Activated CD4-positive, alpha-beta T cell treated with anti-CD3 and anti-CD28 coated beads, Interleukin-2, amount 10 ng/mL, durations not matched to agents 7 days and 5 days (primary cell): ENCODE measurements at regions of chr11 and their contacts with region 1.

Region 1: DNA sequence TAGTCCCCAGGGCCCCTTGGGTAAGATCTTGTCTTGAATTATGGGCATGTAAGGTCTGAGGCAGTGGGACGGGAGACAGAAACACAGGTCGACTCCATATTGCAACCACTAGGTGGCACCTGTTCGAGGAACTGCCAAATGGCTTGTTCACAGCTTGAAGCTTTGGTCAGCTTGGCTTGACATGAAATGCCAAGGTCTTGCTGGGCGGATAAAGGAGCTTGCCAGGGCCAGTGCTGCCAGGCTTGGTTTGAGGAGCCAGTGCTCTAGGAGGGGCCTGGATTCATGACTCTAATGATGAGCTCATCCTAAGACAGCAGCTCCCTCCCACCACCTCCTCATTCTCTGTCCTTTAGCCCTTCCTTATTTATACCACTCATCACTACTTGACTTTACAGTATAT is 11.9 kb upstream of the NRIP3 start:
- DNase-seq: peak; percentile 69
- H3K4me3 Mint-ChIP-seq: no peak overlapping the region
- H3K27ac Mint-ChIP-seq: no peak overlapping the region
- H3K4me1 Mint-ChIP-seq: peaks cover 31% of the 10 kb centered on the region
- H3K27me3 Mint-ChIP-seq: peaks cover 11% of the 10 kb centered on the region

Region 2: DNA sequence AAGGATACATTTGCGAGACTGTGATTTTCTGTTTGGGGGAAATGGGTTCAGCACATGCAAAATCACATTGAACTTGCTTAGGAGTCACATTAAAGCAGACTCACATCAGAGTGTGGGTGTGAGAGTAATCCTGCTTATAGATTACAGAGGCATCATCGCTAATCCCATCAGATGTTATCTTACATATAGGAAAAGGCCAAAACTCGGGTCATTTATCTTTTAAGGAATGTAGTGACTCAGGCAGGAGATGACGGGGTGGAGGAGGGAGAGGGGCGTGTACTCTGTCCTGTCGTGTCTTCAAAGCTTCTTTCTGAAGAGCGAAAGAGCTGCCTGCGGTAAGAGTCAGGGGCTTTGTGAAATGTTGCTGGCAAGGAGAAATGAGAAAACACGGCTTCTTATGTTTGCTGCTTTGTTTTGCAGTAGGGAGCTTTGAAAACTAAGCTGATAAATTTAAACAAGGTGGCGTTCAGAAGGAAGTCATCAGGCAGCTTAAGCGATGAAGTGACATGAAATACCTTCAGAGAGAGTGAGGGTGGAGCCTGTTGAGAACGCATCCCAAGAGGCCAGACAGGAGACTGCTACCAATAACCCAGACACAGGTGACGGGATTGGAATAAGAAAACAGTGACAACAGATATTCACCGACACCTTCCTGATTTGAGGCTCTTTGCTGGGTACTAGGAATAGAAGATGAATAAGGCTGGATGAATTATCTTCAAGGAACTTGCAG is 80.8 kb before region 1 on chr11:
- CTCF ChIA-PET with region 1: no interaction called
- POLR2A ChIA-PET with region 1: no interaction called
- DNase-seq: no peak
- H3K4me3 Mint-ChIP-seq: peak overlapping the region; percentile 12
- H3K27ac Mint-ChIP-seq: no peak overlapping the region
- H3K4me1 Mint-ChIP-seq: peaks cover 4% of the 10 kb centered on the region
- H3K27me3 Mint-ChIP-seq: no peaks in the 10 kb centered on the region

Region 3: DNA sequence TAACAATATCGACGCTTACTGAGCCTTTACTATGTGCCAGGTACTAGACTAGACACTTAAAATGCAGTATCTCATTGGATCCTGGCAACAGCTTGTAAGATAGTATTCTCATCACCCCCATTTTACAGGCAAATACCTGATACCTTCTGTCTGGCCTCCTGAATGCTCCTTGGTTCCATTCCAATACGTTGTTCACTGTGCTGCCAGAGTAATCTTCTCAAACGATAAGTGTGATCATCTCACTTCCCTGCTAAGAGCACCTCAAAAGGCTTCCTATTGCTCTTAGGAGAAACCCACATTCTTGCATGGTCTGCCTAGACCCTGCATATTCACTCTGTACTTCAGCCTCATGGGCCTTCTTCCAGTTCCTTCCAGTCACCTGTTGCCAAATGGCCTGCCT is 10.6 kb before region 1 on chr11:
- CTCF ChIA-PET with region 1: interaction called, 14 read pairs
- POLR2A ChIA-PET with region 1: no interaction called
- DNase-seq: no peak
- H3K4me3 Mint-ChIP-seq: peak overlapping the region; percentile 34
- H3K27ac Mint-ChIP-seq: no peak overlapping the region
- H3K4me1 Mint-ChIP-seq: peaks cover 22% of the 10 kb centered on the region
- H3K27me3 Mint-ChIP-seq: peaks cover 63% of the 10 kb centered on the region

Region 4: GRCh38 chr11:9028581-9028980 is 12.9 kb after region 1 on chr11:
- CTCF ChIA-PET with region 1: interaction called, 19 read pairs
- POLR2A ChIA-PET with region 1: no interaction called
- DNase-seq: no peak
- H3K4me3 Mint-ChIP-seq: no peak overlapping the region
- H3K27ac Mint-ChIP-seq: no peak overlapping the region
- H3K4me1 Mint-ChIP-seq: no peaks in the 10 kb centered on the region
- H3K27me3 Mint-ChIP-seq: peaks cover 6% of the 10 kb centered on the region

Region 5: DNA sequence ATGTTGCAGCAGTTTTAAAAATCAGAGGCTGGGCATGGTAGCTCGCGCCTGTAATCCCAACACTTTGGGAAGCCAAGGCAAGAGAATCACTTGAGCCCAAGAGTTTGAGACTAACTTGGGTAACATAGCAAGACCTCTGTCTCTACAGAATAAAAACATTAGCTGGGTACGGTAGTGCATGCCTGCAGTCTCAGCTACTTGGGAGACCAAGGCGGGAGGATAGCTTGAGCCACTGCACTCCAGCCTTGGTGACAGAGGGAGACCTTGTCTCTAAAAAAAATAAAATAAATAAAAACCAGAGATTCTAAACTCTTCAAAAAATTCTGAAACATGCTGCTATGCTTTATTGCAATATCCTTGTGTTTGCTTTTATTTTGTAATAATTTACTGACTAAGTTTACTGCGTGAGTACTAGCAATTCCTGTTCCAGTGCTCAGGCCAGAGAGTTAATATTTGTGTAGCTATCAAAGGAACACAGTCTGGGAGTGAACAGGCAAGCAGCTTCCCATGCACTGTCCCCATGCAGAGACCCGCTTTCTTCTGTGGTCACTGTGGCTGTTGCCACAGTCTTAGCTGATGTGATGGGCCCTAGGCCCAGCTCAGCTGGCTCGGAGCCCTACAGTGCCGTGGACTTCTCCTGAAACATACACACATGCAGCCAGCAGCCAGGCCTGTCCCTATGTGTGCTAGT is 87.7 kb after region 1 on chr11:
- CTCF ChIA-PET with region 1: no interaction called
- POLR2A ChIA-PET with region 1: no interaction called
- DNase-seq: no peak
- H3K4me3 Mint-ChIP-seq: no peak overlapping the region
- H3K27ac Mint-ChIP-seq: no peak overlapping the region
- H3K4me1 Mint-ChIP-seq: no peaks in the 10 kb centered on the region
- H3K27me3 Mint-ChIP-seq: peaks cover 25% of the 10 kb centered on the region

Region 6: DNA sequence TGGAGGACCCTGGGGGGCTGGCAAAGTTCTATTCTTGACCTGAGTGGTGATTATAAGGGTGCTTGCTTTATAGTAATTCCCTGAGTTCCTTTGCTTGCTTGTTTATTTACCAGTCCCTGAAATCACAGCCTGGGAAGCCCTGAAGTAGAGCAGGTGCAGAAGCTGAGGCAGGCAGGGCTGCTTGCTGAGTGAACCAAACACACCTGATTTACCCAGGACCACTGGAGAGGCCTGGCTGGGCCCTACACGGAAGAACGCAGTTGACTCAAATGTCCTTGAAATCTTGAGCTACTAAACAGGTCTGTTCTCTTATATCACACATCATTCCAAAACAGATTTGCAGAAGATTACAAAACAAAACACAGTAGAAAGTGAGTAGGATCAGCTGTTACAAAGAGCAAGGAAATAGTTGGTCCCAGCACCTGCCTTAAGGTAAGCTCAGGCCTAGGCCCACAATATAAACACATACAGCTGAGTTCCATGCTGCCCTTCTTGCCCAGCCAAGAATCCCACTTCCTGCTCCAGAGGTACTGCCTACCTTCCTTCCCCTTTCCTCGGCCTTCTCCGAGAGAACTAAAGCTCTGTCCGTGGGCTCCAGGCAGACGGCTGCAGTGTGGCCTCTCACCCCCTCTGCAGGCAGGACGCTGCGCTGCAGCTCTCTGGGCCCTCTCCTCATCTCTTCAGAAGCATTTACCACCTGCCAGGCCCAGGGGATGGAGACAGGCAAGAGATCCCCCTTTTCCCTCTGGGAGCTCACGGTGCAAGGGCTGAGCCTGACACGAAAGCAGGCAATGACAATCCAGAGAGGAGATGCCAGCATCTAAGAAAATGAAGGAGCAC is 121.8 kb after region 1 on chr11:
- CTCF ChIA-PET with region 1: interaction called, 29 read pairs
- POLR2A ChIA-PET with region 1: no interaction called
- DNase-seq: peak; percentile 73
- H3K4me3 Mint-ChIP-seq: no peak overlapping the region
- H3K27ac Mint-ChIP-seq: no peak overlapping the region
- H3K4me1 Mint-ChIP-seq: peaks cover 33% of the 10 kb centered on the region
- H3K27me3 Mint-ChIP-seq: no peaks in the 10 kb centered on the region